K562 (cell line): ENCODE measurements at regions of chr10 and their contacts with region 1.

Region 1: GRCh38 chr10:102450194-102450938 is 977 bp downstream of the C10orf95 start:
- DNase-seq: peak; percentile 74 to 86 (median 77)
- ATAC-seq: peak; percentile 71
- H3K4me3 ChIP-seq: peak overlapping the region; percentile 80
- H3K27ac ChIP-seq: peak overlapping the region; percentile 95
- H3K4me1 ChIP-seq: peaks cover 27 to 40% of the 10 kb centered on the region in 2 experiments
- H3K27me3 ChIP-seq: no peaks in the 10 kb centered on the region
- CTCF ChIP-seq: no peak
- EP300 ChIP-seq: no peak
- POLR2A ChIP-seq: peak; percentile 69
- RAD21 ChIP-seq: 0 out of 4 replicates have a peak, but pooled peaks of 1 of the 2 experiments have one; percentile 7

Region 2: DNA sequence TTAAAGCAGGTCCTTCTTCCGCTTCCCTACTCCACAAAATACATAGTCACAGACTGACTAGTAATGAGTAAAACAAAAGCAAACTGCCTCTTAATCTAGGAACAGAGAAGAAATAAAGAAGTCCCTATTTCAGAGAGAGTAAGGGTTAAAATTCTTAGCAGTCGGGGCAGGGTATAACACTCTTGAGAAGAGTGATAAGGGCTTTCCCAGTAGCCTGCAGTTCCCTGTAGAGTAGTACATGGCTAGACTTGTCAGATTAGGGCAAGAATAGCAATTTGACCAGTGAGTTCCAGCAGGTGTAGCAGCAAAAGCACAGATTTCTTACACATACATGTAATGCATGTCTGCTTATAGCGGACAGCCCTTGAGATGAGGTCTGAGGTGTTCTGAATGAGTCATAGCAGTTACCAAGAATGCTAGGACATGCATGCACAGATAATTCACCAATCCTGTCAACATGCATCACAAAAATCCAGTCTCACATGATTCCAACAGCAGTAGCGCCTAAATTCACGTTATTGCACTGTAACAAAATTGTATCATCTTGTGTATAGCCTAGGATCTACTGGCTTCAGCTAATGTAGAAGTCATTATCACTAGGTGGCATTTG is 1055.7 kb before region 1 on chr10:
- CTCF ChIA-PET with region 1: no interaction called
- POLR2A ChIA-PET with region 1: no interaction called
- in situ Hi-C with region 1: no loop called
- intact Hi-C with region 1: no loop called
- DNase-seq: peak in 2 of 4 experiments; percentile 16 to 40
- ATAC-seq: peak; percentile 74
- H3K4me3 ChIP-seq: no peak overlapping the region
- H3K27ac ChIP-seq: no peak overlapping the region; the same call in 2 of the 3 replicates
- H3K4me1 ChIP-seq: peaks cover 0 to 10% of the 10 kb centered on the region in 2 experiments; a peak in 2 of 5 replicates
- H3K27me3 ChIP-seq: no peaks in the 10 kb centered on the region
- CTCF ChIP-seq: no peak
- EP300 ChIP-seq: no peak
- POLR2A ChIP-seq: no peak
- RAD21 ChIP-seq: no peak

Region 3: DNA sequence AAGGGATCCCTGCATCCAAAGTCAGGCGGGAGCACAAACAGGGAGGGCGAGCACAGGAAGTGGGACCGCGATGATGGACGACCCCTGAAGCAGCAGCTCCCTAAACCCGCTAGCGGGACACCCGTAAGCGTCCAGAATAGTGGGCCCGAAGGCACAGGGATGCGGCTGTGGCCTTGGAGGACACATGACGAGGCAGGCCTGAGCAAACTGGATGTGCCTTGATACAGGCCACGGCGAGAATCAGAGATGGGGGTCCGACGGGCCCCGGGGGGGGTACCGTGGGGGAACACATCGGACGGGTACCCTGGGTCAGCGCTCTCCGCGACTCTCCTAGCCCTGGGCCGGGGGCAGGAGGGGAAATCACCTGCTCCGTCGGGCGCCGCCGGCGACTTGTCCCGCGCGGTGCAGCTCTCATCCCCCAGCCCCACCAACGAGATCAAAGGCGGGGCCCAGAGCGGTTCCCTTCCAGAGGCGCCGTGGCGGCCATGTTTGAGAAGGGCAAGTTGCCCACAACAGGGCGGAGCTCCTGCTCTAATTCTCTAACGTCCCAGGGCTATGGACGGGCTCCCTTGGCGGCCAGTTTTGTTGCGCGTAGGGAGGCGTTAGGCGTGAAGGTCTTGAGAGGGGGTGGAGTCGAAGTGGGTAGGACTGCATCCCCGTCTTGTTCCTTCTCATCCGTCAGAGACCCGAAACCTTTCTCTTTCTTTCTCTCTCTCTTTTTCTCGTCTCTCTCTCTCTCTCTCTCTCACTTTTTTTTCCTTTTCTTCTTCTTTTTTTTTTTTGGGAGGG is 18.0 kb before region 1 on chr10 and contains the start of gene CUEDC2:
- CTCF ChIA-PET with region 1: no interaction called
- POLR2A ChIA-PET with region 1: interaction called, 14 read pairs
- in situ Hi-C with region 1: no loop called
- intact Hi-C with region 1: no loop called
- DNase-seq: peak; percentile 78 to 97 (median 84)
- ATAC-seq: peak; percentile 85
- H3K4me3 ChIP-seq: peak within 1 kb of the TSS; percentile 55
- H3K27ac ChIP-seq: peak within 1 kb of the TSS; percentile 88
- H3K4me1 ChIP-seq: peaks cover 23 to 31% of the 10 kb centered on the region in 2 experiments
- H3K27me3 ChIP-seq: no peaks in the 10 kb centered on the region
- CTCF ChIP-seq: no peak; a peak in 1 of 6 replicates
- EP300 ChIP-seq: peak; percentile 40; the same call in 1 of the 2 replicates
- POLR2A ChIP-seq: peak; percentile 79
- RAD21 ChIP-seq: no peak
- polyA plus RNA-seq, gene CUEDC2: 8.5 to 17.0 TPM

Region 4: DNA sequence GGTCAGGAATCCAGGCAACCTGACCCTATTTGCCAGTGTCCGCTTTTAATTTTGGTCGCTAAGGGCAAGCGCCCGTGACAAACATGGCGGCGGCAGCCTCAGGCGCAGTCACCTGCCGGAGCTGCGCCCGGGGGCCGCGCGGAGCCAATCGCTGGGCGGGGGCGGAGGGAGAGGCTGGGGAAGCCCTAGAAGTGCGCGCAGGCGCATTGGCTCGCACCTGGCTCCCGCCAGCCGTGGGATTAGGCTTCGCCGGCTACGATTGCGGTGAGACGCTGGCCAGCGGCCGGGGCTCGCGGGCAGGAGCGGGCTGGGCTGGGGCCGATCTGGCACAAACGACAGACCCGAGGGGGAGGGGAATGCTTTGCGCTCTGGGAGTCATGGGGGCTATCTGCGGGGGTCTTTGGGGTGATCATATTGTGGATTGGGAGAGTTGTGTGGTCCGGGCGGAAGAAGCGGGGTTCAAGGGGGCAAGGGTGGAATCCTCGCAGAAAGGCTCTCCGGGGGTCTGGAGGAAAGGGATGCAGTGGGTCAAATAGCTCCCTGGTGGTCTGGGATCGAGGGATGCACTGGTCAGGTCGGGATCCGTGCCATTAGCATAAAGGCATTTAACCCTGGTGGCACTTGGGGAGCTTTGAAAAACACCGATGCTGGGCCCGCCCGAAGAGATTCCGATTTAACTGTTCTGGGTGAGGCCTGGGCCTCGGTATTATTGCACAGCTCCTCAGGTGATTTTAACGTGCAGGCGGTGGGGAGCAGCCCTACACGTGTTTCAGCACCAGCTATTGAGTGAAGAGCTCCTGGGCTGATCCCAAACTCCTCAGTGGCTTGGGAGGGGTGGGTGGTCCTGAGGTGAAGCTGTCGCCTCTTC is 11.1 kb after region 1 on chr10:
- CTCF ChIA-PET with region 1: no interaction called
- POLR2A ChIA-PET with region 1: interaction called, 24 read pairs
- in situ Hi-C with region 1: no loop called
- intact Hi-C with region 1: no loop called
- DNase-seq: peak; percentile 94 to 97 (median 96)
- ATAC-seq: peak; percentile 91
- H3K4me3 ChIP-seq: peak overlapping the region; percentile 41
- H3K27ac ChIP-seq: peak overlapping the region; percentile 73
- H3K4me1 ChIP-seq: peaks cover 21 to 26% of the 10 kb centered on the region in 2 experiments
- H3K27me3 ChIP-seq: no peaks in the 10 kb centered on the region
- CTCF ChIP-seq: no peak
- EP300 ChIP-seq: no peak
- POLR2A ChIP-seq: peak; percentile 55; the same call in 1 of the 2 replicates
- RAD21 ChIP-seq: no peak